ENCODE measurements at regions of chr4 and their contacts with region 1.

Region 1: DNA sequence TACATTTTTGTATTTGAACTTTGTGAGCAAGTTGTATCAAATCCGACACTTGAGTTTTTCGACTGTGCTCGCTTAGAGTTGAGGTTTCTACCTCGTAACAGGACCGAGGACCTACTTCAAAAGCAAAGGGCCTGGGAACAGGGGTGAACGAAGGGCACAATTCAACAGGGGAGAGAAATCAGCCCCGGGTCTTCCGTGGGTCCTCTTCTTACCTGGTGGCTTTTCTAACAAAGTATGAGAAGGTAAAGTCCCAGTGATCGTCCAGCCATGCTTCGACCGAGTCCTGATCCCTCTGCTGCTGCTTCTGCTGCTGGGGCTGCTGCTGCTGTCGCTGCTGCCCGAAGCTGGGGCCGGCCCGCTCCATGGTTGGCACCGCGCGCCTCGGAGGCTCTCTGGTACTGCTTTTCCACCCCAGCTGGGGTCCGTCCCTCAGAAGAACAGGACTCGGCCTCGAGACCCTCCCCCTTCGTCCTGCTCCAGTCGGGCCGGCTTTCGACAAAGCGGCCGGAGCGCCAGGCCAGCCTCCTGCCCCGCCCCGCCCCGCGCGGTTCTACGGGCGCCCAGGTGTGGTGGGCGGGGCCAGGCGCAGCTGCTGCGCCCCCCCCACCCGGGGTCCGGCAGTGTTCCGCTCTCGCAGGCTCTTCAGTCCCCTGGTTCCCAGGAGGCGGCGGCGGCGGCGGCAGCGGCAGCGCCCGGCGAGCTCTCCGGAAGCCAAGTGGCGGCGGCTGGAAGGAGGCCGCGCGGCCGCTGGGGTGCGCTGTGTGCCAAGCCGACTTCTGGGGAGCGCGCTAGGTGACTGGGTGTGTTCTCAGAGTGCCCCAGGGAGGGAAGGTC is at the start of gene PDE5A:
- DNase-seq: peak; percentile 32 to 58 (median 43)
- H3K4me3 ChIP-seq: peak within 1 kb of the TSS; percentile 44 to 82 (median 56)
- H3K4me3 Mint-ChIP-seq: peak within 1 kb of the TSS; percentile 81 to 98
- H3K27ac ChIP-seq: no peak within 1 kb of the TSS
- H3K27ac Mint-ChIP-seq: no peak within 1 kb of the TSS
- H3K4me1 ChIP-seq: peaks cover 25 to 30% of the 10 kb centered on the region in 2 donors
- H3K4me1 Mint-ChIP-seq: peaks cover 22% of the 10 kb centered on the region
- H3K27me3 ChIP-seq: peaks cover 52 to 64% of the 10 kb centered on the region in 2 donors
- H3K27me3 Mint-ChIP-seq: peaks cover 48 to 73% (median 56%) of the 10 kb centered on the region in 3 donors
- CTCF ChIP-seq: peak; percentile 78
- polyA plus RNA-seq, gene PDE5A: 0.80 to 0.82 TPM in 2 of 3 donors, not detected in the other

Region 2: DNA sequence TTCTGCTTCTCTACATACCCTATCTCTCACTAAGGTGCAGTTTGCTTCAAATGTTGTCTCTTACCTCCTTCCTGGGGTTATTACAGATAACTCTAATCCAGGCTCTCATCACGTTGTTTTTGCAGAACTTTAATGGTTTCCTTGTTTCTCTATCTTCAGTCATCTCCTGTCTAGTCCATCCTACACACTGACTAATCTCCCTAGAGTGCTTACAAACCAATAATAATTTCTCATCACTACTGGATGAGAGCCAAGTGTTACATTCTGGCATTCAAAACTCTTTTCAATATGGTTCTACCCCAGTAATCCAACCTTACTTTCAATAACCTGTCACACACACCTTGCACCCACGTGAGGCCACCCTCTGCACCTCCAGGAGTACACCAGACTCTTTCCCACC is 653.8 kb before region 1 on chr4:
- intact Hi-C with region 1: loop called in 1 of 2 experiments (anchors 10 kb)
- DNase-seq: no peak
- H3K4me3 ChIP-seq: no peak overlapping the region
- H3K4me3 Mint-ChIP-seq: no peak overlapping the region
- H3K27ac ChIP-seq: no peak overlapping the region
- H3K27ac Mint-ChIP-seq: no peak overlapping the region
- H3K4me1 ChIP-seq: no peaks in the 10 kb centered on the region
- H3K4me1 Mint-ChIP-seq: no peaks in the 10 kb centered on the region
- H3K27me3 ChIP-seq: no peaks in the 10 kb centered on the region
- H3K27me3 Mint-ChIP-seq: peaks cover 0 to 2% (median 0%) of the 10 kb centered on the region in 3 donors
- CTCF ChIP-seq: no peak

Region 3: DNA sequence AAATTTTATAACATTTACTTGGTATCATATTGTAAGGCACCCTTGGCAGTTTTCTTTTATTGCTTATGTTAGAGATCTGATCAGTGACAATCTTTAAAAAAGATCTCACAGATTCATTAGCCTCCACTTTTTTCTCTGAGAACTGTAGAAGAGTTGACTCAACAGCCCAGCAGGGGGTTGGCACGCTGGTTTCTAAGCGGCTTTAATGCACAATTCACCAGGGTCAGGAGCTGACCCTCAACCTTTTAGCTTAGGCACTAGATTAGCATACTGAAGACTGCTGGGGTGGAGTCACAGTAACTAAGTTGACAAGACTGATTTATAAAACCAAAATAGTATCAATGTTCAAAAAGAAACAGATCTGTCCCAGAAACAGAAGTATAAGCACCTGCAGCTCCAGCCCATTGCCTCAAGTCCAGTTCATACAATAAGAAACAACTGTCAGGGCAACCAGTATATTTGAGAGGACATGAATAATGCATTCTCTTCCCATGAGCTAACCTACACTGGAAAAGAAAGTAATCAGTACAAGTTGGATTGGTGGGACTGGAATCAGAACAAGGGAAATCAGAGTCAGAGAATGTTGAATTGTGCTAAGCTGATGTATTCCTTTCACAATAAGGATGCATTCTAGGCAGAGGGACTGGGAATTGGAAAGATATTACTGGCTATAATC is 77.5 kb before region 1 on chr4:
- intact Hi-C with region 1: no loop called
- DNase-seq: no peak
- H3K4me3 ChIP-seq: no peak overlapping the region
- H3K4me3 Mint-ChIP-seq: no peak overlapping the region
- H3K27ac ChIP-seq: no peak overlapping the region
- H3K27ac Mint-ChIP-seq: no peak overlapping the region
- H3K4me1 ChIP-seq: no peaks in the 10 kb centered on the region
- H3K4me1 Mint-ChIP-seq: no peaks in the 10 kb centered on the region
- H3K27me3 ChIP-seq: no peaks in the 10 kb centered on the region
- H3K27me3 Mint-ChIP-seq: peaks cover 0 to 2% (median 0%) of the 10 kb centered on the region in 3 donors
- CTCF ChIP-seq: no peak

Region 4: GRCh38 chr4:119735165-119735651 is 106.7 kb after region 1 on chr4:
- intact Hi-C with region 1: no loop called
- DNase-seq: no peak
- H3K4me3 ChIP-seq: no peak overlapping the region
- H3K4me3 Mint-ChIP-seq: no peak overlapping the region
- H3K27ac ChIP-seq: no peak overlapping the region
- H3K27ac Mint-ChIP-seq: no peak overlapping the region
- H3K4me1 ChIP-seq: no peaks in the 10 kb centered on the region
- H3K4me1 Mint-ChIP-seq: no peaks in the 10 kb centered on the region
- H3K27me3 ChIP-seq: no peaks in the 10 kb centered on the region
- H3K27me3 Mint-ChIP-seq: peaks cover 0 to 2% (median 0%) of the 10 kb centered on the region in 3 donors
- CTCF ChIP-seq: no peak